ENCODE measurements at regions of chr1 and their contacts with region 1.

Region 1: GRCh38 chr1:22586356-22587130 is 23.3 kb downstream of the EPHA8 start:
- DNase-seq: no peak
- H3K4me3 ChIP-seq: no peak overlapping the region
- H3K27ac ChIP-seq: no peak overlapping the region
- H3K4me1 ChIP-seq: no peaks in the 10 kb centered on the region
- H3K27me3 ChIP-seq: no peaks in the 10 kb centered on the region
- CTCF ChIP-seq: no peak

Region 2: GRCh38 chr1:22633697-22634463 is 47.3 kb after region 1 on chr1:
- CTCF ChIA-PET with region 1: no interaction called
- dilution Hi-C with region 1: loop called (anchors 5 kb)
- in situ Hi-C with region 1: no loop called
- intact Hi-C with region 1: no loop called
- DNase-seq: no peak
- H3K4me3 ChIP-seq: no peak overlapping the region
- H3K27ac ChIP-seq: no peak overlapping the region
- H3K4me1 ChIP-seq: no peaks in the 10 kb centered on the region
- H3K27me3 ChIP-seq: peaks cover 1% of the 10 kb centered on the region
- CTCF ChIP-seq: no peak

Region 3: DNA sequence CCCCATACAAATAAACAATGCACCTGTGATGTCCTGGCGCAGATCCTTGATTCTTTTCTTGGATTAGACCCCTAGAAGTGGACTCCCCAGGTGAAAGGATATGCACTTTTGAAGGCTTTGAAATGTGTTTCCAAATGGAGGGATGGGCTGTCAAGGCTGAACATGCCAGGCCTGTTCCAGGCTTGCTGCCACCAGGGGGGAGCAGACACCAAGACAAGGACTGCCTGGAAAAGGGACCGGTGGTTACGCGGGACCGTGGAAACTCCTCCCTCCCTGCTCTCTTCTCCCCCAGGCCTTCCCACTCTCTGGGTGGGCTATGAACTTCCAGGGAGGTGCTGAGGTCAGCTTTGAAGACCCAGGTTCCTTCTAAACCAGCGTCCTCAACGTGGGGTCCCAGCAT is 79.2 kb after region 1 on chr1:
- CTCF ChIA-PET with region 1: no interaction called
- dilution Hi-C with region 1: loop called (anchors 5 kb)
- in situ Hi-C with region 1: no loop called
- intact Hi-C with region 1: no loop called
- DNase-seq: peak; percentile 5
- H3K4me3 ChIP-seq: no peak overlapping the region
- H3K27ac ChIP-seq: no peak overlapping the region
- H3K4me1 ChIP-seq: no peaks in the 10 kb centered on the region
- H3K27me3 ChIP-seq: no peaks in the 10 kb centered on the region
- CTCF ChIP-seq: peak; percentile 34 to 50